AG04450 (cell line): ENCODE measurements at regions of chr12 and their contacts with region 1.

Region 1: DNA sequence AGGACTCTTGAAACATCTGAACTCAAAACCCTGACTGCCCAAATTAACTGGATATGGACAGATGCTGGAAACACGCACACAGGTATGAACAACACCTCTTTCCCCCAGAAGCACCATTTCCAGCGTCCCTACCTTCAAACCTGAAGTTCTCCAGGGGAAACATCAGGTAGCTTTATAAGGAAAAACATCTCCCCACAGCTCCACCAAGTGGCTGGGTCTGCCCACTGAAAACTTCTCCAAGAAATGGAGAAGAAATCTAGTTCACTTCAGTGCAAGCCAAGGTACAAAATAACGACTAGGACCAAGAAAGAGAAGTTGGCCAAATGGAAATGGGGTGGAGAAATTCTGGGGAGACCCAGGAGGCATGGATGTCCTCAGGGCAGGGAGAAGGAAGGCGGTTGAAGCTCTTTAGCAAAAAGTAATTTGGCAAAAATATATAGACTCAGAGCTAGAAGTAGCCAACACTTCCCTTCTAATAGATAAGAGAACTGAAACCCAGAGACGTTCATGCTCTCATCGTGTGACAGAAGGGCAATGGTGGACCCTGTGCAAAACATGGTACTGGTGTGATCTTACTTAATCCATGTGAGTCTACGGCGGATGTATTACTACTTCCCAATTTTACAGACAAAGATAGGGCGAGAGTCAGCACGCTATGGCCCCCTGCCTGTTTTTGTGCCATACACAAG is 10.5 kb upstream of the NUAK1 start:
- DNase-seq: no peak
- H3K4me3 ChIP-seq: no peak overlapping the region
- H3K27ac ChIP-seq: no peak overlapping the region
- H3K27me3 ChIP-seq: no peaks in the 10 kb centered on the region
- CTCF ChIP-seq: peak; percentile 81

Region 2: GRCh38 chr12:105420659-105421240 is 728.5 kb before region 1 on chr12:
- CTCF ChIA-PET with region 1: interaction called, 25 read pairs
- POLR2A ChIA-PET with region 1: no interaction called
- DNase-seq: peak; percentile 59
- H3K4me3 ChIP-seq: no peak overlapping the region
- H3K27ac ChIP-seq: no peak overlapping the region
- H3K27me3 ChIP-seq: no peaks in the 10 kb centered on the region
- CTCF ChIP-seq: peak; percentile 90

Region 3: DNA sequence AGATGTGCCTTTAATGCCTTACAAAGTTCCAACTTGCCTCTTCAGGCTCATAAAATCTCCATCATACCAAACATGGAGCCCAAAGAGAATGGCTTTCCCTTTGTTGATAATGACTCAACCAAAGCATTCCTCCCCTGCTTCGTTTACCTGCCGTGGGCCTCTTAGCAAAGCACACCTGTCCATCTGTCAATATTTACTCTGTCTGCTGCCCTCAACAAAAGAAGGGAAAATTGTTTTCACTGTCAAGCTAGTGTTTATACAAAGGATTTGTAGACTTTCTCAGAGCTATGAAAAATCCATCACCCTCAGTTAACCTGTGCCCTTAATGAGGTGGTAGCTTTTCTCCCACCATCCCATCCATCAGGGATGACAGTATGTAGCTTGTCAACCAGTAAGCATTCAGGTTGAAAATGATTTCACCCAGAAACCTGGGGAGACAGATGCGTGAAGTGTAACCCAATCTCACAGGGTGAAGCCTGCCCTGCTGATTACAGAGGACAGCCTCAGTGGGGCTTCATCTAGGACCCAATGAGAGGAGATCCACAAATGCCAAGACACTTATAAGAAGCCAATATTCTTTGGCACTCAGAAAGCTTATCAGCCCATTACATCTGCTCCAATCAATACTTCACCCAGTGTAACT is 288.6 kb before region 1 on chr12:
- CTCF ChIA-PET with region 1: no interaction called
- POLR2A ChIA-PET with region 1: no interaction called
- DNase-seq: no peak
- H3K4me3 ChIP-seq: no peak overlapping the region
- H3K27ac ChIP-seq: no peak overlapping the region
- H3K27me3 ChIP-seq: no peaks in the 10 kb centered on the region
- CTCF ChIP-seq: no peak

Region 4: DNA sequence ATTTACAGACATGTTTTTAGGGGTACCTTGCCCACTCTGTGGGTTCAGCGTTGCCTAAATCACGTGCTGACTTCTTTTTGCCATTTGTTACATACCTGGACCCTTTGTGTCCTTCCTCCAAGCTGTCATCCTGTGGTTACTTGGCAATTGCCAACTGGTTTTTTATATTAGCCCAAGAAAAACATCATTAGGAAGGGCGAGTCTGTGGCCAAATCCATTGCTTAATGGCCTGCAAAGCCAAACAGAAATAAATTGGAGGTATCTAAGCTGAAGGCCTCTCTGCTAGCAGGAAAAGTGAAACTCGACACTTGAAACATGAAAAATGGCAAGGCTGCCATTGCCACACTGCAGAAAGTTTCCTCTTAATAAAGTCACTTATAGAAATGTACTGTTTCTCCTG is 200.9 kb before region 1 on chr12:
- CTCF ChIA-PET with region 1: no interaction called
- POLR2A ChIA-PET with region 1: no interaction called
- DNase-seq: no peak
- H3K4me3 ChIP-seq: no peak overlapping the region
- H3K27ac ChIP-seq: no peak overlapping the region
- H3K27me3 ChIP-seq: no peaks in the 10 kb centered on the region
- CTCF ChIP-seq: no peak

Region 5: GRCh38 chr12:106170285-106170684 is 21.0 kb after region 1 on chr12:
- CTCF ChIA-PET with region 1: interaction called, 11 read pairs
- POLR2A ChIA-PET with region 1: no interaction called
- DNase-seq: no peak
- H3K4me3 ChIP-seq: no peak overlapping the region
- H3K27ac ChIP-seq: no peak overlapping the region
- H3K27me3 ChIP-seq: no peaks in the 10 kb centered on the region
- CTCF ChIP-seq: no peak